Activated naive CD4-positive, alpha-beta T cell treated with anti-CD3 and anti-CD28 coated beads for 36 hours (primary cell): ENCODE measurements at regions of chr22 and their contacts with region 1.

Region 1: GRCh38 chr22:41543854-41544670 is at the start of gene POLR3H:
- DNase-seq: peak; percentile 97
- H3K4me3 Mint-ChIP-seq: peak within 1 kb of the TSS; percentile 94
- H3K27ac Mint-ChIP-seq: peak within 1 kb of the TSS; percentile 87
- H3K4me1 Mint-ChIP-seq: peaks cover 43% of the 10 kb centered on the region
- H3K27me3 Mint-ChIP-seq: no peaks in the 10 kb centered on the region
- total RNA-seq, gene POLR3H: 14.8 to 17.6 TPM

Region 2: GRCh38 chr22:41468381-41469217 is 75.5 kb before region 1 on chr22 and contains the starts of genes ACO2 and PHF5A:
- CTCF ChIA-PET with region 1: no interaction called
- intact Hi-C with region 1: loop called (anchors 1 kb)
- DNase-seq: peak; percentile 99
- H3K4me3 Mint-ChIP-seq: peak within 1 kb of the TSS; percentile 75
- H3K27ac Mint-ChIP-seq: peak within 1 kb of the TSS; percentile 96
- H3K4me1 Mint-ChIP-seq: peaks cover 62% of the 10 kb centered on the region
- H3K27me3 Mint-ChIP-seq: no peaks in the 10 kb centered on the region
- total RNA-seq, gene ACO2: 113 to 118 TPM
- total RNA-seq, gene PHF5A: 67.5 to 69.0 TPM

Region 3: DNA sequence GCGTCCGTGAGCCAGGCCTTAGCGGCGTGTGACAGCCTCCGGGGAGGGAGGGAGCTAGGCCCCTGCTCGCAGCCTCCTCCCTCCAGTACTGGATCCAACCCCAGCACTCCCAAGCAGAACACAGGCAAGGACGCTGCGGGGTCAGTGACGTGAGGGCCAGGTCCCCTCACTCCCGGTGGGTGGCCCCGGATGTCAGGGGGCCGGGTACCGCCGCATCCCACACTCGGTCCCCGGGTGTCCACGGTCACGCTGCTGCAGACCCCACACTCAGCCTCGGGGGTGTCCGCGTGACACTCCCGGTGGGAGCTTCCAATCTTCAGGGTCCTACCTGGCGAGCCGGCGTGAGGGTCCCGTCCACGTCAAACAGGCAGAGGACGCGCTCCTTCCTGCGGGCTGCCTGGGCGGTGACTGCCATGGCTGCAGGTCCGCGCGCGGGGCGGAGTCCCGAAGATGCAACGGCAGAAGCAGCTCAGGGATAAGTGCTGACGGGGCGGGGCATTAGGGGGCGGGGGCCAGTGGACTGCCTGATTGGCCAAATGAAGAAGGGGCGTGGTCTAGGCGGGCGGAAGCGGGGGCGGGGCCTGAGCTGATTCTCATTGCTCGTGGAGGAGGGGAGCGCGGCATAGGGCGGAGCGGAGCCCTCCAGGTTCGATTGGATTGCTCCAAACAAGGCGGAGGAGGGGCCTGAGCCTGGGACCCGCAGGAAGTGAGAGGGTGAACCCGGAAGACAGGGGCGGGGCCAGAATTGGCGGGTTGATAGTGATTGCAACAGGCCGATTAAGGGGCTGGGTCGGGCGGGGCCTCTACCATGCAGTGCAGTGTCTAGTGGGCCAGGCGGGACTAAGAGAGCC is 45.6 kb after region 1 on chr22 and contains the start of gene PMM1:
- CTCF ChIA-PET with region 1: interaction called, 3 read pairs
- intact Hi-C with region 1: loop called (anchors 1 kb)
- DNase-seq: peak; percentile 100
- H3K4me3 Mint-ChIP-seq: peak within 1 kb of the TSS; percentile 93
- H3K27ac Mint-ChIP-seq: peak within 1 kb of the TSS; percentile 84
- H3K4me1 Mint-ChIP-seq: peaks cover 12% of the 10 kb centered on the region
- H3K27me3 Mint-ChIP-seq: no peaks in the 10 kb centered on the region
- total RNA-seq, gene PMM1: 35.3 to 35.6 TPM

Region 4: DNA sequence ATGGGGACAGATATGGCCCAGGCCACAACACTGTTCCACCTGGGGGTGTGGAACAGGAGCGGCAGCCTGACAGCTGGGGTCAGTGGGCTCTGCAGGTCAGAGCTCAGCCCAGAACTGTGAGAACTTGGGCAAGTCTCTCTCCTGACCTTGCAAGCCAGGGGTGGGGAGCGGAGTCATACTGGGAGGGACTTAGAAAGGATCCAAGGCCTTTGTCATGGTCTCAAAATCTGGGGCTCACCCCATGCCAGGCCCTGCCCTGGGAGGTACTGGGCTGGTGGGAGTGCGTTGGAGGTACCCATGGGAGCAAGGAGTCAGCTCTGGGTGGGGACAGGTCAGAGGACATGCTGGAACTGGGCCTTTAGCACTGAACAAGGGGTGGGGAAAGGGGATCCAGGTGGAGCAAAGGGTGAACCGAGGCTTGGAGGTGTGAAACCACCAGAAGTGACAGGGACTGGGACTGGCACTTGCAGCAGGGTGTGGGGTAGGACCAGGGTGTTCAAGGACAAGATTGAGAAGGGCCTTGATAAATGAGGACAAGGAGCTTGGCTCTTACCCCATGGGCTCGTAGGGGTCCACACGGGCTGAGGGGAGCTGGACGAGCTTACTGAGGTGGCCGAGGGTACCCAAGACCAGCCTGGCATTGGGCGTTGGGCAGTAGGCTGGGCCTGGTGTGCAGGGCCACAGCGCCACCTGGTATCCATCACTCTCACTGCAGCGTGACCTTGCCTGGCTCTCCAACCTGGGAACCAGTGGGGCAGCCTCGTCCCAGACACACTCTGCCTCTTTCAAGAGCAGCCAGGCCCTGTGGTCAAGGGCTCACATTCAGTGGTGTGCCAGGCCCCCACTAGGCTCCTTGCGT is 52.9 kb after region 1 on chr22:
- CTCF ChIA-PET with region 1: interaction called, 10 read pairs
- intact Hi-C with region 1: loop called (anchors 1 kb)
- DNase-seq: peak; percentile 60
- H3K4me3 Mint-ChIP-seq: no peak overlapping the region
- H3K27ac Mint-ChIP-seq: no peak overlapping the region
- H3K4me1 Mint-ChIP-seq: no peaks in the 10 kb centered on the region
- H3K27me3 Mint-ChIP-seq: no peaks in the 10 kb centered on the region